CD8-positive, alpha-beta T cell (primary cell): ENCODE measurements at regions of chr7 and their contacts with region 1.

Region 1: DNA sequence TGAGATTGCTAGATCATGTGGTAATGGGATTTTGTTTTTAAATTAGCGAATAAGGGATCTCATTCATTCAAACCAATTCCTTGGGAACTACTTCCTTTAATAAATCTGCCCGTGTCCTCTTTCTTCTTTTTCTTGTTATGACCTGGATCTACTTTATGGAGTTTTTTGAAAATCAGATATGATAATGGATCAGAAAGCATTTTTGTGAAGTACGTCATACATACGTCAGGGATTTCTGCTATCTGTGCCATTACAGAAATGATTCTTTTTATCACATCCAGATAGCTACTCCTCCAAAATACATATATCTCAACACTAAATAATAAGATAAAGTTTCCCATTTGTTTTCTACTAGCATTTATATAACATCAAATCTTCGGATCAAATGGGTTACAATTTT is 40.2 kb upstream of the STK17A start:
- DNase-seq: no peak
- ATAC-seq: no peak
- H3K4me3 ChIP-seq: no peak overlapping the region
- H3K4me3 Mint-ChIP-seq: no peak overlapping the region
- H3K27ac ChIP-seq: no peak overlapping the region
- H3K27ac Mint-ChIP-seq: no peak overlapping the region
- H3K4me1 ChIP-seq: no peaks in the 10 kb centered on the region
- H3K4me1 Mint-ChIP-seq: no peaks in the 10 kb centered on the region
- H3K27me3 ChIP-seq: no peaks in the 10 kb centered on the region
- H3K27me3 Mint-ChIP-seq: peaks cover 17% of the 10 kb centered on the region
- CTCF ChIP-seq: no peak

Region 2: DNA sequence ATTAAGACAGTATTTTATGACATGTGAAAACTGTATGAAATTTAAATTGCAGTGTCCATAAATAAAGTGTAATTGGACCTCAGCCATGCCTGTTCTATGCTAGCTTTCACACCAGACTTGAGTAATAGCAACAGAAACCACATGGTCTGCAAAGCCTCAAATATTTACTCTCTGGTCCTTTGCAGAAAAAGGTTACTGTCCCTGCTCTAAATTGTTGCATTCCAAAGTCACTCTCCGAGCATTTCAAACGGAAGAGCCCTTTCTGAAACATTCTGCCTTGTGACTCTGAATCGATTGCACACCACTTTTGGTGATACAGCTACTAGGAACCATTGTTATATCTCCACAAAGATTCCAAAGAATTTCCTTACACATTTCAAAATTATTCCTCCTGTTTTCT is 40.8 kb before region 1 on chr7:
- CTCF ChIA-PET with region 1: no interaction called
- POLR2A ChIA-PET with region 1: no interaction called
- intact Hi-C with region 1: loop called in 1 of 2 experiments (anchors 1 kb)
- DNase-seq: no peak
- ATAC-seq: no peak
- H3K4me3 ChIP-seq: no peak overlapping the region
- H3K4me3 Mint-ChIP-seq: no peak overlapping the region
- H3K27ac ChIP-seq: no peak overlapping the region
- H3K27ac Mint-ChIP-seq: no peak overlapping the region
- H3K4me1 ChIP-seq: no peaks in the 10 kb centered on the region
- H3K4me1 Mint-ChIP-seq: no peaks in the 10 kb centered on the region
- H3K27me3 ChIP-seq: no peaks in the 10 kb centered on the region
- H3K27me3 Mint-ChIP-seq: peaks cover 10% of the 10 kb centered on the region
- CTCF ChIP-seq: no peak